ENCODE measurements at regions of chr22 and their contacts with region 1.

Region 1: GRCh38 chr22:25777870-25778269 is 35.9 kb downstream of the MYO18B start:
- DNase-seq: peak; percentile 44
- H3K4me3 ChIP-seq: no peak overlapping the region
- H3K27ac ChIP-seq: no peak overlapping the region
- H3K4me1 ChIP-seq: no peaks in the 10 kb centered on the region
- H3K27me3 ChIP-seq: no peaks in the 10 kb centered on the region
- CTCF ChIP-seq: peak in 1 of 2 donors; percentile 33
- POLR2A ChIP-seq: no peak

Region 2: DNA sequence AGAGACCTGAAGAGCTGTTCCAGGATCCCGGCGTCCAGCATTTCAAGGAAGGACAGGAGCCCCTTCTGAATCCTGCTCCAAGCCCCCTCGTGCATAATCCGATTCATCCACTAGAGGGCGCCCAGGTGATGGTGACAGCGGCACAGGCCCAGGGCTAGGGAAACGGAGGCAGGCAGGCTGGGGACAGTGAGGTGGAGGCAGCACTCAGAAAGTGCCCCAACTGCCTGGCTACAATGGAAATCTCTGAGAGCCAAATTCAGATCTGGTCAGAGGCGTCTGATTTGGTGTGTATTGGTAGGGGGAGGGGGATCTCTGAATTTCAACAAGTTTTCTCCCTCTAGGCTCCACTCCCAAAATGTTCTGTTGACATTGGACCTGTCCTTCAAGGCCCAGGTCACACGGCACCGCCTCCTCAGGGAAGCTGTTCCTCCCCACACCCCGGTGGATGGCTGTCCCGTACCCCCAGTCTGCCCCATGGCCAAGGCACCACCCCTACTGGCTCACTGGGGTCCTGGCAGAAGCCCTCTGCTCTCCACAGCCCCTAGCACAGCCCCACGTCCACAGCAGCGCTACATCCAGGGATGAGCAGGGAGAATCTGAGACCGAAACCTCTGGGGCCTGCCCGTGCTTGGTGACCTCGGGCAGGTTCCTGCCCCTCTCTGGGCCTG is 415.5 kb before region 1 on chr22:
- CTCF ChIA-PET with region 1: interaction called, 4 read pairs
- POLR2A ChIA-PET with region 1: no interaction called
- dilution Hi-C with region 1: no loop called
- intact Hi-C with region 1: loop called (anchors 1 kb)
- DNase-seq: peak; percentile 54
- H3K4me3 ChIP-seq: no peak overlapping the region
- H3K27ac ChIP-seq: no peak overlapping the region
- H3K4me1 ChIP-seq: peaks cover 10% of the 10 kb centered on the region
- H3K27me3 ChIP-seq: no peaks in the 10 kb centered on the region
- CTCF ChIP-seq: peak; percentile 87
- POLR2A ChIP-seq: no peak

Region 3: DNA sequence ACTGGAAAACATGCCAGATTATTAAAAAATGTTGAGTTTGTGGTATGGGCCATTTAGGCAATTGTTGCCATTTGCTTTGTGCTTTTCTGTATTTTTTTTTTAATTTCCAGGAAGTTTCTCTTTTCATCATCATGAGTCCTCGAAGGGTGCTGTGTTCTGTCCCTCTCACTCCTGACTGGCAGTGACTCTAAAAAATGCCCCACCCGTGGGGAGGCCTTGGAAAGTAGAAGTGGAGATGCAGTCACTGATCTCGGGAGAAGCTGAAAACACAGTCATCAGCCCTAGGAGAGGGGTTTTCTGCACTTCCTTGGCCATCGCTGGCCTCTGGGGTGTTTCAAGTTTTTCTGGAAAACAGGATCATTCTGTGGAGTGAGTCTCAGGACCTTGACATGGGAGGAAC is 311.9 kb before region 1 on chr22:
- CTCF ChIA-PET with region 1: interaction called, 159 read pairs
- POLR2A ChIA-PET with region 1: no interaction called
- dilution Hi-C with region 1: no loop called
- intact Hi-C with region 1: loop called (anchors 1 kb)
- DNase-seq: no peak
- H3K4me3 ChIP-seq: no peak overlapping the region
- H3K27ac ChIP-seq: no peak overlapping the region
- H3K4me1 ChIP-seq: no peaks in the 10 kb centered on the region
- H3K27me3 ChIP-seq: no peaks in the 10 kb centered on the region
- CTCF ChIP-seq: no peak
- POLR2A ChIP-seq: no peak

Region 4: DNA sequence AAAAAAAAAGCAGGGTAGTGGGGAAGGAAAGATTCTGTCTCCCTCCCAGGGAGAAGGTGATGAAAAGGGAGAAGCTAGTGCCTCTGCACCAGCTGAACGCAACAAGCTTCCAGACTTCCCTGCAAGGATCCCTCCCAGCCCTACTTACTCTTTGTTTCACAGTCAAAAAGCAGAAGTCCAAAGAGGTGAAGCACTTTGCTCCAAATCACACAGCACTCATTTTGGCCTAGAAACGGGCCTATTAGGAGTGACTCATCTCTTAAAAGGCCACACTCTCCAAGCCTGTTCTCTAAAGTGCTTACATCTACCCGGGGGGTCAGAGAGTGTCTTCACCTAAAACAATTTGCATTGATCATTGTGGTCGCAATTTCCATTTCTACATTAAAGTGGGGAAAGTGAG is 231.1 kb before region 1 on chr22:
- CTCF ChIA-PET with region 1: interaction called, 48 read pairs
- POLR2A ChIA-PET with region 1: no interaction called
- dilution Hi-C with region 1: no loop called
- intact Hi-C with region 1: loop called (anchors 1 kb)
- DNase-seq: no peak
- H3K4me3 ChIP-seq: no peak overlapping the region
- H3K27ac ChIP-seq: no peak overlapping the region
- H3K4me1 ChIP-seq: no peaks in the 10 kb centered on the region
- H3K27me3 ChIP-seq: peaks cover 0 to 8% of the 10 kb centered on the region in 2 experiments
- CTCF ChIP-seq: no peak
- POLR2A ChIP-seq: no peak

Region 5: GRCh38 chr22:25702040-25702439 is 75.8 kb before region 1 on chr22:
- CTCF ChIA-PET with region 1: interaction called, 23 read pairs
- POLR2A ChIA-PET with region 1: no interaction called
- dilution Hi-C with region 1: no loop called
- intact Hi-C with region 1: loop called (anchors 2 kb)
- DNase-seq: peak; percentile 29
- H3K4me3 ChIP-seq: no peak overlapping the region
- H3K27ac ChIP-seq: no peak overlapping the region
- H3K4me1 ChIP-seq: no peaks in the 10 kb centered on the region
- H3K27me3 ChIP-seq: no peaks in the 10 kb centered on the region
- CTCF ChIP-seq: no peak
- POLR2A ChIP-seq: no peak

Region 6: GRCh38 chr22:26330966-26331625 is 553.2 kb after region 1 on chr22:
- CTCF ChIA-PET with region 1: interaction called, 6 read pairs
- POLR2A ChIA-PET with region 1: no interaction called
- dilution Hi-C with region 1: no loop called
- intact Hi-C with region 1: loop called (anchors 1 kb)
- DNase-seq: peak; percentile 37
- H3K4me3 ChIP-seq: no peak overlapping the region
- H3K27ac ChIP-seq: no peak overlapping the region
- H3K4me1 ChIP-seq: no peaks in the 10 kb centered on the region
- H3K27me3 ChIP-seq: peaks cover 0 to 2% of the 10 kb centered on the region in 2 experiments
- CTCF ChIP-seq: peak; percentile 82 to 84
- POLR2A ChIP-seq: no peak

Measured in endothelial cell of umbilical vein (primary cell).